Dorsolateral prefrontal cortex (tissue), 120 donors: ENCODE measurements at regions of chr22 and their contacts with region 1.

Region 1: GRCh38 chr22:23893943-23894709 is at the start of gene MIF:
- DNase-seq: peak; percentile 94 to 98 (median 96)
- H3K4me3 ChIP-seq: peak within 1 kb of the TSS; percentile 59 to 92 (median 82)
- H3K27ac ChIP-seq: peak within 1 kb of the TSS; percentile 74 to 99 (median 97)
- H3K27me3 ChIP-seq: no peaks in the 10 kb centered on the region
- CTCF ChIP-seq: peak; percentile 51 to 87 (median 77)
- total RNA-seq, gene MIF: 175 to 552 (median 413) TPM

Region 2: DNA sequence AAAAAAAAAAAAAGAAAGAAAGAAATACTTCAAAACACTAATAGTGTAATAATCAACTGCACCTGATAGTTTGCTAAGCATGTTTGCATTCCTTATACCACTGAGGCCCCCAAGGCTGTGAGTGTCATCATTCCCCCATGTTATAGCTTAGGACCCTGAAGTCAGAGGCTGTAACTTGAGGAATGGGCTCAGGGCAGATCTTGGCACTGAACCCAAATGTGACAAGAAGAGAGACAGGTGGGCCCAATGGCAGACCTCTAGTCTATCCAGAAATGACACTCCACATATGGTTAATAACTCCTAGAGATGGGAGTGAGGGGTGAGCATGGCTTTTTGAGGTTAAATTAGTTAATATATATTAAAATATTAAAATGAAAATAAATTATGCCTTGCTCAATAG is 156.4 kb before region 1 on chr22:
- intact Hi-C with region 1: no loop called
- DNase-seq: no peak
- H3K4me3 ChIP-seq: no peak overlapping the region
- H3K27ac ChIP-seq: no peak overlapping the region
- H3K27me3 ChIP-seq: no peaks in the 10 kb centered on the region
- CTCF ChIP-seq: no peak

Region 3: GRCh38 chr22:23838681-23839468 is 55.3 kb before region 1 on chr22 and contains the start of gene DERL3:
- intact Hi-C with region 1: no loop called
- DNase-seq: peak; percentile 90 to 98 (median 96)
- H3K4me3 ChIP-seq: peak within 1 kb of the TSS; percentile 44 to 88 (median 64)
- H3K27ac ChIP-seq: peak within 1 kb of the TSS in 5 of 59 donors; percentile 8 to 20 (median 14)
- H3K27me3 ChIP-seq: no peaks in the 10 kb centered on the region
- CTCF ChIP-seq: peak in 6 of 56 donors; percentile 10 to 33 (median 20)
- total RNA-seq, gene DERL3: 0.56 to 10.6 (median 2.5) TPM

Region 4: GRCh38 chr22:23913661-23914353 is 19.7 kb after region 1 on chr22:
- intact Hi-C with region 1: loop called (anchors 1 kb)
- DNase-seq: peak; percentile 99 to 100 (median 99)
- H3K4me3 ChIP-seq: peak overlapping the region; percentile 44 to 86 (median 70)
- H3K27ac ChIP-seq: peak overlapping the region; percentile 3 to 96 (median 89)
- H3K27me3 ChIP-seq: no peaks in the 10 kb centered on the region
- CTCF ChIP-seq: peak in 34 of 56 donors; percentile 3 to 57 (median 34)